Right cardiac atrium (tissue), 5 donors: ENCODE measurements at regions of chr7 and their contacts with region 1.

Region 1: DNA sequence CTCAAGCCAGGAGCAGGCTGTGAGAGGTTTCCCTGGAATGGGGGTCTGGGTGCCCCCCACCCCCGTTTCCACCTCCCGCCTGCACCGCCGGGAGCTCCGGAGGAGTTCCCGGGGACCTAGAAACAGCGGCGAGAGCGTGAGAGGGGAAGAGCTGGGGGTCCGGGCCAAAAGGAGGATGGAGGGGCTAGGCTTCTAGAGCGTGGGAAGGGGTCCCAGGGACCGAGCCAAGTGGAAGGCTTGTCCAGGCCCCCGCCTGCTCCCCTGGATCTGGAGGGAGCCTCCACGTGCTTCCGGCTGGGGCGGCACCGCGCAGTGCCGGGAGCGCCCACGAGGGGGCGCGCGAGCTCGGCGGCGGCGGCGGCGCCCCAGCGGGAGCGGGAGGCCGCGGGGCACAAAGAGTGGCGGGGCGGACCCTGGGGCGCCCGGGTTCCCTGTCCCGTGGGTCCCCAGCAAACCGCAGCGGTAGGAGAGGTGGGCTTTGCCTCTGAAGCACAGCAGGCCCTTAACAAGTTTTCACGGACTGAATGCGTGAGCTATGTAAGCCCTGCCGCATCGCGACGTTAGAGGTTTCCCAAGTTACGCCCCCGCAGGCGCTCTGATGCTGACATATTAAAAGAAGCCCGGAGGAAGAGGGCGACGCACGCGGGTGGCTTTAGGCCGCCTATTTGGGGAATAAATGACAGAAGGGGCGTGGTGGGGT is 104.4 kb upstream of the LRRC4 start:
- DNase-seq: peak; percentile 49 to 82 (median 81)
- ATAC-seq: peak; percentile 87 to 93
- H3K4me3 ChIP-seq: peak overlapping the region; percentile 62
- H3K27ac ChIP-seq: no peak overlapping the region
- H3K4me1 ChIP-seq: peaks cover 6% of the 10 kb centered on the region
- H3K27me3 ChIP-seq: no peaks in the 10 kb centered on the region

Region 2: DNA sequence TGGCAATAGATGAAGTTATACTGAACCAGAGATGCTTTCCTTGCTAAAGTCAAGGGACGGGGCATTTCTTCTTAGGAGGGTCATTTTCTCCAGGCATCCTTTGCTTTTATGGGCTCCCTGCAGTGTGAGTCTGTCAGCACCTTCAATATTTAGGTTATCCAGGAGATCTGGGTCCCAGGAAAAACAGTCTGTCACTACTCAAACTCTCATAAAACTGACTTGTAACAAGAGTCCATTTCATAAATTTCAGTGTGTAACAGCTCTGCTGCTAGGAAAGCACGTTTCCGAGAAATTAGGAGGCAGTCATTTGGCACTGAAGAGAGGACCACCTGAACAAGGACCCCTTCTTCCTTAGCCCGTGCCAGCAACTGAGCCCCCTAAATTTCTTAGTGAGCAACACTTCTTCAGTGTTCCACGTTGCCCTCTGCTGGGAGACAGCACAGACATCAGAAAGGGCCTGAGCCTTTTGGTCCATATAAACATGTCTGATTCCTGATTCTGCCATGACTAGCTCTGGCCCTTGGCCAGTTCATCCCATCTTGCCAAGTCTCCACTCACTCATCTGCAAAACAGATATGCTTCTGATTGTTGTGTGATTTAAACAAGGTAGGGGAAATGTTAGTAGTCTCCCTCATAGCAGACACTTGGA is 557.5 kb before region 1 on chr7:
- intact Hi-C with region 1: no loop called
- DNase-seq: peak in 1 of 3 donors; percentile 54
- ATAC-seq: no peak
- H3K4me3 ChIP-seq: no peak overlapping the region
- H3K27ac ChIP-seq: no peak overlapping the region
- H3K4me1 ChIP-seq: peaks cover 8% of the 10 kb centered on the region
- H3K27me3 ChIP-seq: no peaks in the 10 kb centered on the region

Region 3: GRCh38 chr7:127708788-127709187 is 426.9 kb before region 1 on chr7:
- intact Hi-C with region 1: loop called in 2 of 4 experiments (anchors 10 kb)
- DNase-seq: peak in 2 of 3 donors; percentile 68 to 80
- ATAC-seq: peak; percentile 85 to 88
- H3K4me3 ChIP-seq: no peak overlapping the region
- H3K27ac ChIP-seq: no peak overlapping the region
- H3K4me1 ChIP-seq: no peaks in the 10 kb centered on the region
- H3K27me3 ChIP-seq: no peaks in the 10 kb centered on the region

Region 4: DNA sequence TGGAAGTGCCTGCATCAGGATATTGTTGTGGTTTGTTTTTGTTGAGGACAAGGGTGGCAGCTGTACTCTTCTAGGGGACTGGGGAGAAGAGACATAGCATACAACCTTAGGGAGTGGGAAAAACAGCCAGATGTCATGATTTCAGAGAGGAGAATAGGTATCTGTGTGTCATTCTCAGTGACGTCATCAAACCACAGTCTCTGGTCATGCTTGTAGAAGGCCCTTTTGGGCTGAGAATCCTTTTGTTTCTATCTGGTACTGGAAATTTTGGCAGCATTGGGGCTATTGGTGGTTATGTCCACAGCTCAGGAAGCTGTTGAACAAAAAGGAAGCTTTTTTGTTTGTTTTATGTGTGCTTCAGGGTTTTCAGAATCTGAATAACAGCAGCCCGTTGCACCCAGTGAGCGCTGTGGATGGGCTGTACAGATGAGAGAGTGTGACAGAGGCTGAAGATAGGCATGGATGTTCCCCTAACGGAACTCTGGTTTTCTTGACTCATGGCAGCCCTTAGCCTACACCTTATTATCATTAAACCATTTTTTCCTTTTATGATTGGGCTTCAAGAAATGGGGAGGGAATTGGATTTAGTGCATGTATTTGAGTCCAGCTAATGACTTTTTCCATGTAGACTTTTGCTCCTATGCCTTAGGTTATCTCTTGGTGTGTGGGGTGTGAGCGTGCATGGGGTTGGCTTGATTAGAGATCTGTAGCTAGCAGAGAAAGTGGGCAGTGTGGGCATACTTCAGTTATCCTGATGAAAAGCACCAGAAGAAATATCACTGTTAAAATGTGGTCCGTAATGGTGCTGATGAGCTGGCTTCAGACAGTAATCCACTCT is 417.9 kb before region 1 on chr7:
- intact Hi-C with region 1: loop called in 1 of 4 experiments (anchors 10 kb)
- DNase-seq: no peak
- ATAC-seq: no peak
- H3K4me3 ChIP-seq: no peak overlapping the region
- H3K27ac ChIP-seq: no peak overlapping the region
- H3K4me1 ChIP-seq: no peaks in the 10 kb centered on the region
- H3K27me3 ChIP-seq: no peaks in the 10 kb centered on the region